CD4-positive, alpha-beta memory T cell (primary cell): ENCODE measurements at regions of chr1 and their contacts with region 1.

Region 1: DNA sequence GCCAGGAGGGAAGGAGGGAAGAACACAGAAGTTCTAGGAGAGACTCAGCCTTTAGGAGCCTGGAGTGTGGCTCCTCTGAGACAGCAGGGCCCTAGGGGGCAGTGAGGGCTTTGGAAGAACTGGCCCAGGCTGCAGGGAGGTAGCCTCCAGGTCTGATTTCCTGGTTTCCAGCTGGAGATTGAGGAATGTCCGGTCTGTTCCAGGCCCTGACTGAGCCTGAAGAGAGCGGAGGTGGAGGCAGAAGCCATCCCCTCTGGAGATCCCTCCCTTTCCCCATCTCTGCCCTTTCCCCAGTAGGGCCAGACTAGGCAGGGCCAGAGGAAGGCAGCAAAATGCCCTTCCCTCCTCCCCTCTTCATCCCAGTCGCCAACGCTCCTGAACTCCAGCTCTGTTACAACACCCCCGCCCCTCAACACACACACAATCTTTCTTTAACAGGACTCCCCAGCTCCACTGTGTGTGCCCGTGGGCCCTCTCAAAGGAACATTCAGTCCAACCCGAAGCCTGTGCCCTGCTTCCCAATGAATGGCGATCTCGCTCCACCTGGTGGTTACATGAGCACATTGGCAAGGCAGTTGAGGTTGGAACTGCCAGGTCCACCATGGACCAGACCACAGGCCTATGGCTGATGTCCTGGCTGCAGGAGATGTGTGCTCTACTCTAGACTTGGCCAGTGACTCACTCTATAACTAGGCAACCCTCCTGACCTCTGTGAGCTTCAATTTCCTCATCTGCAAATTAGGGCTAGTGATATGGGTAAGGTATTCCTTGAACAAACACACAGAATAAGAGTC is 32.0 kb downstream of the MAP7D1 start:
- DNase-seq: peak; percentile 80 to 87 (median 83)
- H3K4me3 ChIP-seq: no peak overlapping the region
- H3K4me3 Mint-ChIP-seq: no peak overlapping the region
- H3K27ac ChIP-seq: no peak overlapping the region
- H3K27ac Mint-ChIP-seq: peak overlapping the region; percentile 52 to 92 (median 87)
- H3K4me1 ChIP-seq: peaks cover 5% of the 10 kb centered on the region
- H3K4me1 Mint-ChIP-seq: peaks cover 8 to 11% (median 10%) of the 10 kb centered on the region in 4 donors
- H3K27me3 ChIP-seq: no peaks in the 10 kb centered on the region
- H3K27me3 Mint-ChIP-seq: no peaks in the 10 kb centered on the region

Region 2: GRCh38 chr1:36088575-36089443 is 99.2 kb before region 1 on chr1 and contains the start of gene ADPRS:
- CTCF ChIA-PET with region 1: interaction called, 3 read pairs
- POLR2A ChIA-PET with region 1: interaction called, 4 read pairs
- intact Hi-C with region 1: loop called (anchors 1 kb)
- DNase-seq: peak; percentile 88 to 91 (median 89)
- H3K4me3 ChIP-seq: peak within 1 kb of the TSS; percentile 29 to 87
- H3K4me3 Mint-ChIP-seq: peak within 1 kb of the TSS; percentile 87 to 98 (median 92)
- H3K27ac ChIP-seq: peak within 1 kb of the TSS; percentile 92
- H3K27ac Mint-ChIP-seq: peak within 1 kb of the TSS; percentile 88 to 99 (median 96)
- H3K4me1 ChIP-seq: peaks cover 18% of the 10 kb centered on the region
- H3K4me1 Mint-ChIP-seq: peaks cover 11 to 38% (median 15%) of the 10 kb centered on the region in 4 donors
- H3K27me3 ChIP-seq: no peaks in the 10 kb centered on the region
- H3K27me3 Mint-ChIP-seq: peaks cover 6 to 14% of the 10 kb centered on the region in 2 donors
- total RNA-seq, gene ADPRS: 26.7 to 28.6 TPM

Region 3: DNA sequence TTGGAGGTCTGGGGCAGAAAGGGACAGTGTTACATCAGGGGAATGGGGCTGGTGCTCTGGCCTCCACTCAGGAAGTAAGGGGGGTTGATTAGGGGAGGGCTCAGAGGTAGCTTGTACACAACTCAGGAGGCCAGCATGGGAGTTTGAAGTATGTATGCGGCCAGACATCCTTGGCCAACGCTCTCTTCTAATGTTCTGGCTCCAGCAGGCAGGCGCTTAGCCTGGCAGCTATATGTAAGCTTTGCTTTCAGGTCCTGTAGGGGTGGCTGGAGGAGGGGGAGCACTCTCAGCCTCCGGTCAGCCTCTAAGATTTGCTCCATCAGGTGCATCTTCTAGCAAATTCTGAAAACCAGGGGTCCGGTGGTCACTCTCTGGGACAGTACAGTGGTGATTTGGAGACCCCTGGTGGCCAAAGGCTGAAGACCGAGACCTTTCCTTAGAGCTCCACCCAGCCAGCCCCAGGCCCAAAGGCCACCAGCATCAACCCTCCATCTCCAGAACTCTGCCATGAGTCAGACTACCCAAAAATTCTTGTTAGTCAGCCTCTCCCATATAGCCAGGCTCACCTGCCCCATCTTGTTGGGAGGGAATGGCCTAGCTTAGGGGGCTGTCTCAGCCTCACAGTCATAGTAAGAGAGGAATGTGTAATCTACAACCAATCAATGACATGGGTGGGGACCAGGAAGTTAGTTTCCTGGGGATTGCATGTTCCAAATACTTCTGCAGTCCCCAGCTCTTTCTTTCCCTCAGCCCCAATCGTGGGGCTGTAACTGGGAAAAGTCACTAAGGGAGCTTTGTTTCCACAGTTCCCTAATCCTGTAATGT is 53.3 kb before region 1 on chr1:
- CTCF ChIA-PET with region 1: interaction called, 14 read pairs
- POLR2A ChIA-PET with region 1: no interaction called
- intact Hi-C with region 1: no loop called
- DNase-seq: no peak
- H3K4me3 ChIP-seq: no peak overlapping the region
- H3K4me3 Mint-ChIP-seq: no peak overlapping the region
- H3K27ac ChIP-seq: no peak overlapping the region
- H3K27ac Mint-ChIP-seq: peak overlapping the region in 6 of 7 donors; percentile 3 to 90 (median 64)
- H3K4me1 ChIP-seq: no peaks in the 10 kb centered on the region
- H3K4me1 Mint-ChIP-seq: peaks cover 0 to 6% (median 3%) of the 10 kb centered on the region in 4 donors
- H3K27me3 ChIP-seq: no peaks in the 10 kb centered on the region
- H3K27me3 Mint-ChIP-seq: no peaks in the 10 kb centered on the region

Region 4: GRCh38 chr1:36166938-36167910 is 20.8 kb before region 1 on chr1:
- CTCF ChIA-PET with region 1: interaction called, 97 read pairs
- POLR2A ChIA-PET with region 1: interaction called, 50 read pairs
- intact Hi-C with region 1: no loop called
- DNase-seq: no peak
- H3K4me3 ChIP-seq: no peak overlapping the region
- H3K4me3 Mint-ChIP-seq: peak overlapping the region in 1 of 8 donors; percentile 4
- H3K27ac ChIP-seq: no peak overlapping the region
- H3K27ac Mint-ChIP-seq: peak overlapping the region; percentile 50 to 90 (median 87)
- H3K4me1 ChIP-seq: peaks cover 42% of the 10 kb centered on the region
- H3K4me1 Mint-ChIP-seq: peaks cover 39 to 66% (median 50%) of the 10 kb centered on the region in 4 donors
- H3K27me3 ChIP-seq: no peaks in the 10 kb centered on the region
- H3K27me3 Mint-ChIP-seq: no peaks in the 10 kb centered on the region

Region 5: DNA sequence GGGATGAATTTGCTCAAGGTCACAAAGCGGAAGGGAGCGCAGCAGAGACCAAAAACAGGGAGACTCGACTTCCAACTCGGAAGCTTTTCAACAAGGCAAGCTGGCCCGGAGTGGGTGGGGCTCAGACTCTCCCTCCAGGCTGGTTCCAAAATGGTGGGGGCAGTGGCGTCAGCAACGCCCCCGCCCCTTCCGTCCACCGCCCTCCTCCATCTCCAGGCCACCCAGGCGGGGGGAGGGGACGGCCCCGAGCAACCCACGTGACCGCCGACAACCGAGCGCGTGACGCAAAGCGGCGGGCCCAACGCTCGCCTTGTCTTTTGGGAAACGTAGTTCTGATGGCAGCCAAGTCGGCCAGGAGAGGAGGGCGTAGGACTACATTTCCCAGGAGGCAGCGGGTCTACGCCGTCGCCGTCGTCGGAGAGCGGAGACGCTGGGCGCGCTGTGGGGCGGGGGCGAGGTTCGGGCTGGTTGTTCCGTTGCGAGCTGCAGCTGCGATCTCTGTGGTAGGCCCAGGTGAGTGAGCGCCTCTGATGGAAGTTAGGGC is 36.1 kb after region 1 on chr1 and contains the start of gene THRAP3:
- CTCF ChIA-PET with region 1: interaction called, 23 read pairs
- POLR2A ChIA-PET with region 1: interaction called, 19 read pairs
- intact Hi-C with region 1: loop called (anchors 1 kb)
- DNase-seq: peak; percentile 100
- H3K4me3 ChIP-seq: peak within 1 kb of the TSS; percentile 77 to 97
- H3K4me3 Mint-ChIP-seq: peak within 1 kb of the TSS; percentile 95 to 99 (median 98)
- H3K27ac ChIP-seq: peak within 1 kb of the TSS; percentile 98
- H3K27ac Mint-ChIP-seq: peak within 1 kb of the TSS; percentile 97 to 100 (median 100)
- H3K4me1 ChIP-seq: peaks cover 45% of the 10 kb centered on the region
- H3K4me1 Mint-ChIP-seq: peaks cover 19 to 46% (median 29%) of the 10 kb centered on the region in 4 donors
- H3K27me3 ChIP-seq: no peaks in the 10 kb centered on the region
- H3K27me3 Mint-ChIP-seq: no peaks in the 10 kb centered on the region
- total RNA-seq, gene THRAP3: 127 to 130 TPM

Region 6: GRCh38 chr1:36420836-36421664 is 233.1 kb after region 1 on chr1:
- CTCF ChIA-PET with region 1: no interaction called
- POLR2A ChIA-PET with region 1: no interaction called
- intact Hi-C with region 1: loop called (anchors 2 kb)
- DNase-seq: peak; percentile 83 to 88 (median 86)
- H3K4me3 ChIP-seq: no peak overlapping the region
- H3K4me3 Mint-ChIP-seq: peak overlapping the region; percentile 49 to 84 (median 74)
- H3K27ac ChIP-seq: peak overlapping the region; percentile 30
- H3K27ac Mint-ChIP-seq: peak overlapping the region; percentile 82 to 97 (median 94)
- H3K4me1 ChIP-seq: peaks cover 21% of the 10 kb centered on the region
- H3K4me1 Mint-ChIP-seq: peaks cover 19 to 29% (median 22%) of the 10 kb centered on the region in 4 donors
- H3K27me3 ChIP-seq: no peaks in the 10 kb centered on the region
- H3K27me3 Mint-ChIP-seq: no peaks in the 10 kb centered on the region